IMR-90 (cell line): ENCODE measurements at regions of chr18 and their contacts with region 1.

Region 1: DNA sequence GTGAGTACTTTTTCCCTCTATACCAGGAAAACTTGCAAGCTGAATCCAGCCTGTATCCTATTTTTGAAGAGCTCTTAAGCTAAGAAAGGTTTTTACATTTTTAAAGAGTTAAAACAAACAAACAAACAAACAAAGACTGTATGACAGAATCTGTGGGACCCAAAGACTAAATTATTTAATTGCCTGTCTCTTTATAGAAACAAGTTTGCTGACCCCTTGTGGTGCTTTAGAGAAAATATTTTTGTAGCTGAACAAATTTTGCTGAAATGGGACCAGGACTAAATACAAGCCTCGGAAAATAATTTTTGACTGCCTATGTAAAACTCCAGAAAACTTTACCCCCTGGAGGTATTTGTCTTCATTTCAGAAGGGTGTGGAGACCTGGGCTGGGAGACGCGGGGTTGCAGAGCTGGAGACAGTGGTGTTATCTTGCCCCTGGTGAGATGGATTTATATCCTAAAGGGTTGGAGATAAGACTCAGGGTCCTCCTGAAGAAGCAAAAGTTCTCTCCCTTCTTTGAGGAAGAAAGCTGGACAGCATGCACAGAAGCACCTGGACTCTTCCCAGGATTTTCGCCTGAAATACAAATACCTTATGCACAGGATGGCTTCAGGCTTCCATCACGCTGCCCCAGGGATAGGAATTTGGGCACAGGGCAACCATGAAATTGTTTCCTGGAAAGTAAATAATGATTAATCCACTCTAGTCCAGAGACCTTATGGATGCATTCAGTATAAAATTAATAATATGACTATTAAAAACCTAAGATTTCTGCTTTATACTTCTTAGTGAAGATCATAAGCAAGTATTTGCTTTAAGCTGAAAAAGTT is 54.3 kb downstream of the TMX3 start:
- DNase-seq: peak; percentile 61
- ATAC-seq: peak; percentile 81
- H3K4me3 ChIP-seq: no peak overlapping the region
- H3K27ac ChIP-seq: no peak overlapping the region
- H3K4me1 ChIP-seq: no peaks in the 10 kb centered on the region
- H3K27me3 ChIP-seq: no peaks in the 10 kb centered on the region
- CTCF ChIP-seq: peak; percentile 68
- POLR2A ChIP-seq: no peak
- RAD21 ChIP-seq: peak; percentile 73

Region 2: GRCh38 chr18:67783196-67783946 is 877.2 kb before region 1 on chr18:
- CTCF ChIA-PET with region 1: no interaction called
- POLR2A ChIA-PET with region 1: no interaction called
- dilution Hi-C with region 1: no loop called
- in situ Hi-C with region 1: no loop called
- intact Hi-C with region 1: loop called (anchors 10 kb)
- DNase-seq: peak; percentile 93
- ATAC-seq: peak; percentile 81
- H3K4me3 ChIP-seq: no peak overlapping the region
- H3K27ac ChIP-seq: peak overlapping the region; percentile 21; the same call in 1 of the 2 replicates
- H3K4me1 ChIP-seq: peaks cover 5% of the 10 kb centered on the region; the same call in 1 of the 2 replicates
- H3K27me3 ChIP-seq: no peaks in the 10 kb centered on the region
- CTCF ChIP-seq: no peak
- POLR2A ChIP-seq: no peak
- RAD21 ChIP-seq: no peak